RWPE1 (cell line): ENCODE measurements at regions of chr2 and their contacts with region 1.

Region 1: DNA sequence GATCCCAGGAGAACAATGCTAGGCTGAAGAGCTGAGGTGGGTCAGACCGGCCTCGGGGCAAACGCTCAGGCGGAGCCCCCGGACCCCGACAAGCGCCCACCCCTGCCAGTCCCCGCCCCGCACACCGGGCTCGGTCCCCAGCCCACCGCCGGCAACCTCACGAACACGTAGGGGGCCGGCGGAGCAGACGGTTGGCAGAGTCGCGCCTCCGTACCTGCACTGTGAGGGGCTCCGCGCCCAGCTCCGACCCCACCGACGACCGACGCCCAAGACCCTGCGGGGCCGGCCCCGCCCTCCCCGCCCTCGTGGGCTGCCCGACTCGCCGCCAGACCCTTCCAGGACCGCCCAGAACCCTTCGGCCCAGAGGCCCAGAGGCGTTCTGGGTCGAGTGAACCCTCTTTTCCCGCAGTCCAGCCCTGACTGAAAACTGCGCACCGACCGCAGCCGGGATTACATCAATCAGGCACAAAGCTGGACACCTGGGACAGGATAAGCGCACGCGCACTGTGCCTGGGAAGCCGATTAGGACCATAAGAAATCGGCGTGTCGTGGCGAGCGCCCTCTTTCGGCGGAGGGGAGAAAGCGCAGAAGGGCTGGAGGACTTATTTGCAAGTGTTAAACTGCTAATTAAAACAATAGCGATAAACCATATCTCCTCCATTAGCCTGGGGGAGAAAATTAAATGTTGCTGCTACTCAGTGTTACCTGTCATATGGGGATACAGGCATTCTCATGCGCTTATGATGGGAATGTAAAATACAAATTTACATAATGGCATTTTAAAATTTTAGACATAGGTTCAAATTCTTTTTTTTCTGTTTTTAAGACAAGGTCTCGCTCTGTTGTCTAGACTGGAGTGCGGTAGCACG is 11.7 kb upstream of the DCTN1 start:
- DNase-seq: peak; percentile 94
- H3K27ac ChIP-seq: peak overlapping the region; percentile 77
- CTCF ChIP-seq: peak; percentile 97

Region 2: DNA sequence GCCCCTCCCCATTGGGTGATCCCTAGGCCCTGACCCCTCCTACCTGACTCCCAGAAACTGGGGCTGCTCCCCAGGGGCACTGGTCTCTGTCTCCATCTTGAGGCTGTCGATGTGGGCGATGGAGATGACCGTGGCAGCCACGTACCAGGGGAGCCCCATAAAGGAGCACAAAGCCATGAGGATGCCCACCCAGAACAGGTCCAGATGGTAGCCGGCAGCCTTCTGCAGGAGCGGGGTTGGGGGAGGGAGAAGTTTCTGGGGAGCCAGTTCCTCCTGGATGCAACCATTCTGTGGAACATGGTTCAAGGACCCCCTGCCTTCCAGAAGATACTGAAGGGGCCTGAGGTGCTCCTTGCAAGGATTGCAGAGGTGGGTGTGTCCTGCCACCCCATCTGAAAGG is 159.4 kb before region 1 on chr2:
- CTCF ChIA-PET with region 1: no interaction called
- POLR2A ChIA-PET with region 1: no interaction called
- DNase-seq: no peak
- H3K27ac ChIP-seq: no peak overlapping the region
- CTCF ChIP-seq: no peak

Region 3: DNA sequence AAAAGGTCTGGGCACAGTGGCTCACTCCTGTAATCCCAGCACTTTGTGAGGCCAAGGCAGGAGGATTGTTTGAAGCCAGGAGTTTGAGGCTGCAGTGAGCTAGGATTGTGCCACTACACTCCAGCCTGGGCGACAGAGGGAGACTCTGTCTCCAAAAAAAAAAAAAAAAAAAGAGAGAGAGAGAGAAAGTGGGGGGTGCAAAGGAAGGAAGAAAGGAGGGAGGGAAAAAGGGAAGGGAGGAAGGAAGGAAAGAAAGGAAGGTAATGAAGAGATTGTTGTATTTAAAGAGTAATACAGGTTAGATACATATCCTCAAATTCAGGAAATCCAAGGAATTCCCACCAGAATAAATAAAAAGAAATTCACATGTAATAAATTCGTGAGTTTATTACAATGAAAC is 10.1 kb after region 1 on chr2:
- CTCF ChIA-PET with region 1: interaction called, 10 read pairs
- POLR2A ChIA-PET with region 1: no interaction called
- DNase-seq: no peak
- H3K27ac ChIP-seq: no peak overlapping the region
- CTCF ChIP-seq: no peak

Region 4: GRCh38 chr2:74602586-74603281 is 210.9 kb after region 1 on chr2:
- CTCF ChIA-PET with region 1: no interaction called
- POLR2A ChIA-PET with region 1: no interaction called
- DNase-seq: peak; percentile 41
- H3K27ac ChIP-seq: no peak overlapping the region
- CTCF ChIP-seq: no peak